ENCODE measurements at regions of chr2 and their contacts with region 1.

Region 1: DNA sequence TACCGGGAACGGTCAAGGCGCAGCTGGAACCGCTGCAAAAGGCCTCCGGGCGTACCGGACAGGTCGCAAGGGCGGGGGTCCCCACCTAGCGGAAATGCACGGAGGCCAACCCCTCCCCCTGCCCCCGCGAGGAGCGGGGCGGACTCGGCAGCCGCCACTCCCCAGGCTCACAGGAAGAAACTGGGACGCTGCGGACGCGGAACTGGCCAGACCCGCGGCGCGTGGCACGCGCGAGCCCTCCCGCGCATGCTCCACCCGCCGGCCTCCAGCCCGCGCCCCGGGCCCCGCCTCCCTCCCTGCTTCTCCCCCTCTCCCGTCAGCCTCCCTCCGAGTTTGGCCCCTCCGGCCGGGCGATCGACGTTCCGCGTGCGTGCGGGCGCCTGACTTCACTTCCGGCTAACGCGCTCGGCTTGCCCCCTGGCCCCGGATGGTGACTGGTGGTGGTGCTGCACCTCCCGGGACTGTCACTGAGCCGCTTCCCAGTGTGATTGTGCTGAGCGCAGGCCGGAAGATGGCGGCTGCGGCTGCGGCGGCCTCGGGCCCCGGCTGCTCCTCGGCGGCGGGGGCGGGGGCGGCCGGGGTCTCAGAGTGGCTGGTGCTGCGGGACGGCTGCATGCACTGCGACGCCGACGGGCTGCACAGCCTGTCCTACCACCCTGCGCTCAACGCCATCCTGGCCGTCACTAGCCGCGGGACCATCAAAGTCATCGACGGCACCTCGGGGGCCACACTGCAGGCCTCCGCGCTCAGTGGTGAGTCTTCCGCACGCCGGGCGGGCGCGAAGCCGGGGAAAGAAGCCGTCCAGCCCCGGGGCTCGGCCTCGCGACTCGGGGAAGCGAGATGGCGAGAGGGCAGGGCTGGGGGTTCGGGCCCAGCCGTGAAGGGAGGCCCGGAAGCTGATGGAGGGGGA is at the start of gene BIRC6:
- DNase-seq: peak; percentile 74 to 96 (median 91)
- ATAC-seq: peak; percentile 84
- H3K4me3 ChIP-seq: peak within 1 kb of the TSS; percentile 75 to 91
- H3K4me3 Mint-ChIP-seq: peak within 1 kb of the TSS; percentile 95
- H3K27ac ChIP-seq: peak within 1 kb of the TSS; percentile 86 to 91
- H3K27ac Mint-ChIP-seq: peak within 1 kb of the TSS; percentile 95
- H3K4me1 ChIP-seq: peaks cover 39% of the 10 kb centered on the region
- H3K4me1 Mint-ChIP-seq: peaks cover 40% of the 10 kb centered on the region
- H3K27me3 ChIP-seq: no peaks in the 10 kb centered on the region
- H3K27me3 Mint-ChIP-seq: no peaks in the 10 kb centered on the region
- CTCF ChIP-seq: no peak
- total RNA-seq, gene BIRC6: 107 to 109 TPM

Region 2: DNA sequence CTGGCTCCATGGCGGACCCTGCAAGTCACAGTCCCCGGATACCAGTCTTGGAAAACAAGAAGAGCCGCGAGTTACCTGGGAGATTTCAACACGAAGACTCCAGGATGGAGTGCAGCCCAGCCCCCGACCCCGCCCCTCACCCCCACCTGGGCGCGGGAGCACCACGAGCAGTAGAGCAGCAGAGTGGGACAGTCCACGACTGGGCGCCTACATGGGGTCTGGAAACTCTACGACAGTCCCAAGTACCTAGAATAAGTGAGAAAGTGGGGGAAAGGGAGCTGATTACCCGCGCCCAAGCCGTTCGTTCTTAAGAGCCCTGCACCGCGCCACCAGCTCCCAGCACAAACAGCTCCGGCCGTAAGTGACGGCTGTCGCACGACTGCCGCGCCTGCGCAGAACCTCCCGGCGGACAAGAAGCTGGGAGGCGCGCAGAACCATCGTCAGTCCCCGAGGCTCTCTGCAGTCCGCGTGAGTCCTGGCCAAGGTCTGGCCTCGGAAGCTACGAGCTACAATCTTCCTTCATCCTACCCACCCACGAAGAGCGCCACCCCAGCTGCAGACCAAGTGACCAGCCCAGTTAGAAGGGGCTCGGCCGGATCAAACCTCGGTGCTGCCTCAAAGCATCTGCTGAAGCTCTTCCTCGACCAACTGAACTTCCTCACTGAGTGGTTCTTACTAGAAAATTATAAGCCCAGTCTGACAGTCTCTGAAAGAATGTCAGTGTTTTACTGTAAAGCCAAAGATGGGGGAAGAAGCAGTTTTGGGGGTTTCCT is 317.4 kb before region 1 on chr2 and contains the start of gene DPY30:
- CTCF ChIA-PET with region 1: no interaction called
- POLR2A ChIA-PET with region 1: no interaction called
- intact Hi-C with region 1: loop called in 1 of 2 experiments (anchors 1 kb)
- DNase-seq: peak; percentile 76 to 95 (median 91)
- ATAC-seq: peak; percentile 96
- H3K4me3 ChIP-seq: peak within 1 kb of the TSS; percentile 81 to 83
- H3K4me3 Mint-ChIP-seq: peak within 1 kb of the TSS; percentile 94
- H3K27ac ChIP-seq: peak within 1 kb of the TSS; percentile 64 to 86
- H3K27ac Mint-ChIP-seq: peak within 1 kb of the TSS; percentile 98
- H3K4me1 ChIP-seq: peaks cover 8% of the 10 kb centered on the region
- H3K4me1 Mint-ChIP-seq: peaks cover 20% of the 10 kb centered on the region
- H3K27me3 ChIP-seq: no peaks in the 10 kb centered on the region
- H3K27me3 Mint-ChIP-seq: no peaks in the 10 kb centered on the region
- CTCF ChIP-seq: no peak
- total RNA-seq, gene DPY30: 9.6 to 10.8 TPM

Region 3: DNA sequence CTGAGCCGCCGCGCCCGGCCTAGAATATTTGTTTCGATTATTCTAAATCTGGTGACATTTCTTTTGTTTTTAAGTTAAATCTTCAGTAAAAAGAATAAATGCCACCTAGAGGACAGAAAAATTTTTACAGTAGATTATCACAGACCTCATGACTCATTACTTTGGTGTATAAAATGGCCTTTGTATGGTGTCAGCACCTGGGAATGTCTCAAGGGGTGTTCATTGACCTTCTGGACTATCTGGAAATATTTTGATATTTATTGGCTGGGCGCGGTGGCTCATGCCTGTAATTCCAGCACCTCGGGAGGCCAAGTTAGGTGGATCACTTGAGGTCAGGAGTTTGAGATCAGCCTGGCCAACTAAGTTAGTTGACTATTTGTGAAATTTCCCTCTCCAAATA is 221.6 kb before region 1 on chr2:
- CTCF ChIA-PET with region 1: no interaction called
- POLR2A ChIA-PET with region 1: no interaction called
- intact Hi-C with region 1: no loop called
- DNase-seq: peak in 2 of 9 experiments; percentile 16 to 38
- ATAC-seq: no peak
- H3K4me3 ChIP-seq: no peak overlapping the region
- H3K4me3 Mint-ChIP-seq: no peak overlapping the region
- H3K27ac ChIP-seq: no peak overlapping the region
- H3K27ac Mint-ChIP-seq: no peak overlapping the region
- H3K4me1 ChIP-seq: no peaks in the 10 kb centered on the region
- H3K4me1 Mint-ChIP-seq: no peaks in the 10 kb centered on the region
- H3K27me3 ChIP-seq: no peaks in the 10 kb centered on the region
- H3K27me3 Mint-ChIP-seq: no peaks in the 10 kb centered on the region
- CTCF ChIP-seq: peak; percentile 15

Region 4: GRCh38 chr2:32168513-32168912 is 188.5 kb before region 1 on chr2:
- CTCF ChIA-PET with region 1: no interaction called
- POLR2A ChIA-PET with region 1: interaction called, 3 read pairs
- intact Hi-C with region 1: loop called (anchors 2 to 5 kb)
- DNase-seq: no peak
- ATAC-seq: no peak
- H3K4me3 ChIP-seq: no peak overlapping the region
- H3K4me3 Mint-ChIP-seq: no peak overlapping the region
- H3K27ac ChIP-seq: no peak overlapping the region
- H3K27ac Mint-ChIP-seq: peak overlapping the region; percentile 29
- H3K4me1 ChIP-seq: peaks cover 12% of the 10 kb centered on the region
- H3K4me1 Mint-ChIP-seq: peaks cover 53% of the 10 kb centered on the region
- H3K27me3 ChIP-seq: no peaks in the 10 kb centered on the region
- H3K27me3 Mint-ChIP-seq: no peaks in the 10 kb centered on the region
- CTCF ChIP-seq: no peak

Region 5: DNA sequence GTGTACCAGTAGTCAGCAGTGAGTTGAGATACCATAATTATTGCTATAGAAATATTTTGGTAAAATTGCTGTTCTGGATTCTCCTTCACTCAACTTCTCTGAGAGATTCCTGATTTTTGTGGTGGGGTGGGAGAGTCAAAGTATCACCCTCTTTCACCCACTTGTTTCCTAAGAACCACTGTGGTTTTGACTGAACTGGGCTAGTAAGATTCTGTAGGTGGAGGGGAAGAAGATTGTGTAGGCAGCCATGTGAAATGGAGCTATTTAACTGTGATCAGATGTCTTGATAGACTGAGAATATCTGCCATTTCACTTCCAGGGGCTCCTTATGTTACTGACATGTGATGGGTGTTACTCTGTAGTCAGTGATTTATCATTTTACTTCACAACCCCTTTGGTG is 45.1 kb after region 1 on chr2:
- CTCF ChIA-PET with region 1: no interaction called
- POLR2A ChIA-PET with region 1: no interaction called
- intact Hi-C with region 1: loop called in 1 of 2 experiments (anchors 5 kb)
- DNase-seq: no peak
- ATAC-seq: no peak
- H3K4me3 ChIP-seq: no peak overlapping the region
- H3K4me3 Mint-ChIP-seq: no peak overlapping the region
- H3K27ac ChIP-seq: peak overlapping the region in 1 of 2 experiments; percentile 5
- H3K27ac Mint-ChIP-seq: peak overlapping the region; percentile 33
- H3K4me1 ChIP-seq: no peaks in the 10 kb centered on the region
- H3K4me1 Mint-ChIP-seq: peaks cover 8% of the 10 kb centered on the region
- H3K27me3 ChIP-seq: no peaks in the 10 kb centered on the region
- H3K27me3 Mint-ChIP-seq: no peaks in the 10 kb centered on the region
- CTCF ChIP-seq: no peak